Endothelial cell of umbilical vein (primary cell): ENCODE measurements at regions of chr5 and their contacts with region 1.

Region 1: GRCh38 chr5:55868846-55869245 is 17.7 kb downstream of the IL31RA start:
- DNase-seq: peak; percentile 99
- H3K4me3 ChIP-seq: no peak overlapping the region
- H3K27ac ChIP-seq: peak overlapping the region; percentile 85
- H3K4me1 ChIP-seq: peaks cover 19% of the 10 kb centered on the region
- H3K27me3 ChIP-seq: no peaks in the 10 kb centered on the region
- CTCF ChIP-seq: no peak
- POLR2A ChIP-seq: no peak

Region 2: GRCh38 chr5:55711968-55712859 is 156.6 kb before region 1 on chr5 and contains the start of gene SLC38A9:
- CTCF ChIA-PET with region 1: no interaction called
- POLR2A ChIA-PET with region 1: no interaction called
- dilution Hi-C with region 1: no loop called
- intact Hi-C with region 1: loop called (anchors 5 kb)
- DNase-seq: peak; percentile 93
- H3K4me3 ChIP-seq: peak within 1 kb of the TSS; percentile 66 to 81 (median 81)
- H3K27ac ChIP-seq: peak within 1 kb of the TSS; percentile 19
- H3K4me1 ChIP-seq: peaks cover 9% of the 10 kb centered on the region
- H3K27me3 ChIP-seq: no peaks in the 10 kb centered on the region
- CTCF ChIP-seq: no peak
- POLR2A ChIP-seq: peak; percentile 93
- total RNA-seq, gene SLC38A9: 24.9 and 29.0 TPM in 2 replicates

Region 3: DNA sequence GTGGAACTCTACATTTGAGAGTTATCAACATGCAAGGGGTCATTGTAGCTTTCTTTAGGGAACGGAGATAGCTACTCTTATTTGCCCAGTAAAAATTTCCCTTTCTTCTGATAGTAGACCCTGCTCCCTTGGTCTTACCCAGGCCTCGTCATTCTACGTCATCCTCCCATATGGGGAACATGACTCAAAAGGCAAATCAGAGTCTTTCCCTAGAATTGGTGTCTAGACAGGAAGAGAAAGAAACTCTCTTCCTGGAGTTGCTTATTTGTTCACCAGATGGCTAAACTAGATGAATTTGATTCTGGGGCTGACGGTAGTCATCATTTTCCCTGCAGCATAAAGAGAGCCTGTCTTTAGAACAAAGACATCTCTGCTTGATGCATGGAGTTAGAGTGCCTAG is 144.6 kb before region 1 on chr5:
- CTCF ChIA-PET with region 1: no interaction called
- POLR2A ChIA-PET with region 1: no interaction called
- dilution Hi-C with region 1: no loop called
- intact Hi-C with region 1: loop called (anchors 1 kb)
- DNase-seq: peak; percentile 60
- H3K4me3 ChIP-seq: no peak overlapping the region
- H3K27ac ChIP-seq: peak overlapping the region; percentile 12
- H3K4me1 ChIP-seq: no peaks in the 10 kb centered on the region
- H3K27me3 ChIP-seq: no peaks in the 10 kb centered on the region
- CTCF ChIP-seq: no peak
- POLR2A ChIP-seq: no peak

Region 4: DNA sequence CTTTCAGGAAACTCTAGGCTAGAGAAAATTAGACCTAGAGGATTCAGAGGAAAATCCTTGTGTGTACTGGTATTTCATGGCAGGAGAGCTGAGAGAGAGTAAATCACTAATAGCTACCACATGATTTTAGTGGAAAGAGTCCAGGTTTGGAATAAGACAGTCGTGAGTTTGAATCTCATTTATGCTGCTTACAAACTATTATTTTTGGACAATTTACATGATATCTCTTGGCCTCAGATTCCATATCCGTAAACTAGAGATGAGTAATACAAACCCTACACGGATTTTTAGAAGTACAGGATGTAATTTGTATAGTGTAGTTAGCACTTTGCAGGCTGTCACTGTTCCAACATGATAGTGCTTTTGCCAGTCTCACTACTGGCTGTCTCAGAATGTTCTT is 15.0 kb before region 1 on chr5:
- CTCF ChIA-PET with region 1: interaction called, 7 read pairs
- POLR2A ChIA-PET with region 1: no interaction called
- dilution Hi-C with region 1: no loop called
- intact Hi-C with region 1: loop called (anchors 1 kb)
- DNase-seq: peak; percentile 54
- H3K4me3 ChIP-seq: no peak overlapping the region
- H3K27ac ChIP-seq: peak overlapping the region; percentile 24
- H3K4me1 ChIP-seq: peaks cover 39% of the 10 kb centered on the region
- H3K27me3 ChIP-seq: no peaks in the 10 kb centered on the region
- CTCF ChIP-seq: no peak
- POLR2A ChIP-seq: no peak

Region 5: GRCh38 chr5:55929020-55929799 is 60.4 kb after region 1 on chr5:
- CTCF ChIA-PET with region 1: no interaction called
- POLR2A ChIA-PET with region 1: no interaction called
- dilution Hi-C with region 1: no loop called
- intact Hi-C with region 1: no loop called
- DNase-seq: no peak
- H3K4me3 ChIP-seq: no peak overlapping the region
- H3K27ac ChIP-seq: no peak overlapping the region
- H3K4me1 ChIP-seq: peaks cover 14% of the 10 kb centered on the region
- H3K27me3 ChIP-seq: no peaks in the 10 kb centered on the region
- CTCF ChIP-seq: no peak
- POLR2A ChIP-seq: no peak